ENCODE measurements at regions of chr3 and their contacts with region 1.

Region 1: DNA sequence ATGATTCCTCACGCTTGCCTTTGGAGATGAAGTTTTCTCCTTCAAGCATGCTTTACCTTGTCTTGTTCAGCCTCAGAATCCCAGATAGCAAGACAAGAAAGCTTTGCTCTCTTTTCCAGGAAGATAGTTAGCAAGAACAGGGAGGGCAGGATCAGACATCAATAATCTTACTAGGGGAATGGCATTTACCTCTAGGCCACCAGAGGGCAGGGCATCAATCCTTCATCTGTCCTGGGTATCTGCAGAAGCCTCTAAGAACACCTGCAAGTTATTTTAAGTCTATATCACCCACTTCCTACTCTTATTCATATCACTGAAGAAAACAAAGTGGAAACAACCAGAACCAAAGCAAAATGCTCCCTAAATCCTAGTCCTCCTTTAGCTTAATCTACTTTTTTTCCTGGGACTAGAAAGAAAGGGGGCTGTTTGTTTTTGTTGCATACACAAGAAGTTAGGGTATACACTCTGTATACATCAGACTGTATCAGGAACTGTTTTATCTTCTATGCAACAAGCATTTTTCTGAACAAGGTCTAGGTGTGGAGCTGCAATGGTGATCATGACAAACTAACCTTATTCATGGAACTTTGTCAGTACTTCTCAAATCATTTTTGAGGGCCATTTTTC is 862.5 kb downstream of the CADM2 start:
- DNase-seq: no peak
- ATAC-seq: no peak
- H3K4me3 ChIP-seq: no peak overlapping the region
- H3K27ac ChIP-seq: no peak overlapping the region
- H3K4me1 ChIP-seq: no peaks in the 10 kb centered on the region
- H3K27me3 ChIP-seq: no peaks in the 10 kb centered on the region
- CTCF ChIP-seq: peak; percentile 60

Region 2: GRCh38 chr3:86073799-86074198 is 252.6 kb after region 1 on chr3:
- CTCF ChIA-PET with region 1: no interaction called
- POLR2A ChIA-PET with region 1: no interaction called
- in situ Hi-C with region 1: no loop called
- intact Hi-C with region 1: no loop called
- DNase-seq: no peak
- ATAC-seq: no peak
- H3K4me3 ChIP-seq: no peak overlapping the region
- H3K27ac ChIP-seq: no peak overlapping the region
- H3K4me1 ChIP-seq: no peaks in the 10 kb centered on the region
- H3K27me3 ChIP-seq: no peaks in the 10 kb centered on the region
- CTCF ChIP-seq: no peak

Region 3: GRCh38 chr3:86245360-86245759 is 424.1 kb after region 1 on chr3:
- CTCF ChIA-PET with region 1: no interaction called
- POLR2A ChIA-PET with region 1: no interaction called
- in situ Hi-C with region 1: no loop called
- intact Hi-C with region 1: loop called (anchors 5 kb)
- DNase-seq: no peak
- ATAC-seq: no peak
- H3K4me3 ChIP-seq: no peak overlapping the region
- H3K27ac ChIP-seq: no peak overlapping the region
- H3K4me1 ChIP-seq: no peaks in the 10 kb centered on the region
- H3K27me3 ChIP-seq: no peaks in the 10 kb centered on the region
- CTCF ChIP-seq: peak; percentile 19; the same call in 1 of the 2 replicates

Region 4: GRCh38 chr3:86563400-86563970 is 742.2 kb after region 1 on chr3:
- CTCF ChIA-PET with region 1: no interaction called
- POLR2A ChIA-PET with region 1: no interaction called
- in situ Hi-C with region 1: no loop called
- intact Hi-C with region 1: loop called (anchors 5 kb)
- DNase-seq: peak; percentile 5
- ATAC-seq: no peak
- H3K4me3 ChIP-seq: no peak overlapping the region
- H3K27ac ChIP-seq: no peak overlapping the region
- H3K4me1 ChIP-seq: no peaks in the 10 kb centered on the region
- H3K27me3 ChIP-seq: no peaks in the 10 kb centered on the region
- CTCF ChIP-seq: no peak; the same call in 1 of the 2 replicates

Measured in Panc1 (cell line).